ENCODE measurements at regions of chr13 and their contacts with region 1.

Region 1: GRCh38 chr13:20141238-20142022 is 19.4 kb downstream of the GJA3 start:
- DNase-seq: no peak
- CTCF ChIP-seq: no peak

Region 2: DNA sequence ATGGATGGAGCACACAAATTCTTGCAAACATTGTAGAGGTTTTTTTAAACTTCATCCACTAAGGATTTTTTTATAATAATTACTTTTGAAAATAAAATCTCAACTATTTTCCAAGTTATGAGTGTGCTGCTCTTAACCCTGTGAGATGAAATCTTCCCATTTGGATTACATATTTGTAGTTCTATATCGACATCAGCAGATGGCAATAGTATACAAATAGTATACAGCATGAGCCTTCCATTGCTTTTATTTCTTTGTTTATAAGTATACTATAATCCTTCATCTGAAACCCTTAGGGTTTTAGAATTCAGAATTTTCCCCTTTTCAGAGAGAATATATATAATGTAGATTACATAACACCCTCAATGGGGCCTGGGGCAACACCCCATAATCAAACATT is 51.1 kb before region 1 on chr13:
- in situ Hi-C with region 1: loop called (anchors 5 kb)
- DNase-seq: no peak
- CTCF ChIP-seq: no peak

Region 3: DNA sequence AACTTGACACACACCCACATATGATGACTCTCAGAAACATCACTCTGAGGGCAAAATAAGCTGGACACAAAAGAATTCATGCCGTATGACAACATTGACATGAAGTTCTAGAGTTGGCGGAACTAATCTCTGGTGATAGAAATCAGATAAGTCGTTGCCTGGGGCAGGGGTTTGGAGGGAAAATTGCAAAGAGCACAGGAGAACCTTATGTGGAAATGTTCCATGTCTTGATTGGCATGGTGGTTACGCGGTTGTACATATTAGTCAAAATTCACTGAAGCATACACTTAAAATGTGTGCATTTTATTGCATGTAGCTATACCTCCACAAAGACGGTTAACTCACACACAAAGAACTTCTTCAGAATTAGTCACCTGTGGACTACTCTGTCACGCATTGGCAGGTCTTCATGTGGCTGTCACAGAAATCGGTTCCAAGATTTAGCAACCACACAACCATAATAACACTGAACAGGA is 228.5 kb after region 1 on chr13:
- in situ Hi-C with region 1: no loop called
- DNase-seq: no peak
- CTCF ChIP-seq: no peak

Region 4: DNA sequence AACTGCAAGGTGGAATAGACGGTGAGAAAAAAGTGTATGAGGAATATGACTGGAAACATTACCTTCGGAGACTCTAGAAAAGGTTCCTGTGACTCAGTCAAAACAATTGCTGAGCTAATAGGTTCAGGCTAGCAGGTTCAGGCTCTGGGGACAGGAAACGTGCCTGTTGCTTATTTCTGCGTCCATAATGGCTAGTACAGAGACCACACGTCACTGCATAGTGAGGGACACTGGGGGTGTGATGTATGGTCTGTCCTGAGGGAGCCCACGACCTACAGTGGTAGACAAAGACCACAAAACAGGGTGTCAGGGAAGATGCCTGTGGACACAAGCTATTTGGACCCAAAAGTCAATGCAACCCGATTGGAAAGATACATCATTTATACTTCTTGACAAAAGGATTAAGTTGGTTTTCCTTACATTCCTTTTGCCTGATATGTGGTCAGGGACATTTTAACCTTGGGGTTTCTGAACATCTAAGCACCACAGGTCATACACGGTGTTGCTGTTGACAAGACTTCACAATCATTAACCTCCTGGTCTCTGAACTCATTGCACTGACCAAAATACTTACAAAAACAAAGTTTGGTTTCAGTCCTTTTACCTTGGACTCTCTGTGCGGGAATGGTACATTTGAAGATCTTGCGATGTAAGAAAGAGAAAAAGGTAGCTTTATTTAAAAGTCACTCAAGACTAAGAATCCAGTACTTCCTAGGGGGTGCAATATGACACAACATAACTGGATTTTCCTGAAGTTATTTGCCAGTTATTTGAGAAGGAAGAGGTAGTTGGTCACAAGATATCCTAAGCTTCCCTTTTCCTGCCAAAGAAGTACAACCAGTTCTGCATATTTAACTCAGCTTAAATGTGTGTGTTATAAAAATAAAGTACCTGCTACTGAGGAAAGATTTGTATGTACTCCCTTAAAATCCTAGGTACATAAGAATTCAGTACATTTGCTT is 364.3 kb after region 1 on chr13:
- in situ Hi-C with region 1: no loop called
- DNase-seq: no peak
- CTCF ChIP-seq: no peak

Measured in GM13976 (cell line).